Adrenal gland (tissue), 19 donors: ENCODE measurements at regions of chr12 and their contacts with region 1.

Region 1: GRCh38 chr12:66688846-66689439 is 10.1 kb upstream of the GRIP1 start:
- DNase-seq: peak; percentile 16 to 73 (median 36)
- H3K4me3 ChIP-seq: no peak overlapping the region
- H3K27ac ChIP-seq: no peak overlapping the region
- H3K4me1 ChIP-seq: no peaks in the 10 kb centered on the region
- H3K27me3 ChIP-seq: no peaks in the 10 kb centered on the region
- CTCF ChIP-seq: peak; percentile 19 to 58 (median 42)
- POLR2A ChIP-seq: no peak

Region 2: DNA sequence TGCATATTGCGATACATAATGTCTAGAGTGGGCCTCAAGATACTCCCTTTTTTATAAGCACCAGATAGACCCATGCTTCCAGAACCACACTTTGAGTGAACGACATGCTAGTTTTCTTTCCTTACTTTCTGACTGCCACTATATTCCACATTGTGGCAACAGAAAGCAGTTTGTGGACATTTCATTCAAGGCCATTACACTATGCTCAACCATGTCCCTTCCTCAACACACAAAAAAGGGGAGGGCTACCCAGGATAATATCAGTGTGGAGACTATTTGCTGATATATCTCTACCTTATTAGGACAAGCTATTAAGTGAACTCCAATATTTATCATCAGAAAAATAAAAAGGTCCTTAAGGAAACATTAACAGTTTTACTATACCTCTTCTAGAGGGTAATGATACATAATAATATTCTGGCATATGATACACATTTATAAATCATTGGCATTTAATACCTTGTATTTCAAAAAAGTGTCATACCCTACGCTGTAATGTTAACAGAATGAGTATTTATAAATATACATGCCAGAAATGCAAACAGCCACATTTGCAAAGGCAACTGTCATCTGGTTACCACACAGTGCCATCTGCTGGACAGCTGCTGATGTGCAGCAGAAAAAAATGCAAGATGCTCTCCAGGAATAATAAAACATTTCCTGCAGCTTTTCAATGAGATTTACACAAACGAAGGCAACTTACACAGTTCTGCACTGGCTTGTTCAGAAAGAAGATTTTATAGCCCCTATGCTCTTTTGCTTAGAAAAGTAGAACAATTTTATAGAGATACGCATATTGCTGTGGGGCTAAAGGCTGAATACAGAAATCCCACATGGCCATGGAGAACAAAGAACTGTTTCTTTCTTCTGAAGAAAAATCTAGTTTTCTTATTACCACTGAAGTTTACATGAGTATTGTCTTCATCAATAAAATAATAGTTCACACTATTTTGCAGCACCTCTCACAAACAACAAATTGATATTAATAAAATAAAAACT is 172.1 kb after region 1 on chr12:
- intact Hi-C with region 1: loop called in 1 of 2 experiments (anchors 10 kb)
- DNase-seq: peak; percentile 31 to 86 (median 58)
- H3K4me3 ChIP-seq: no peak overlapping the region
- H3K27ac ChIP-seq: no peak overlapping the region
- H3K4me1 ChIP-seq: no peaks in the 10 kb centered on the region
- H3K27me3 ChIP-seq: no peaks in the 10 kb centered on the region
- CTCF ChIP-seq: peak; percentile 65 to 93 (median 73)
- POLR2A ChIP-seq: no peak

Region 3: DNA sequence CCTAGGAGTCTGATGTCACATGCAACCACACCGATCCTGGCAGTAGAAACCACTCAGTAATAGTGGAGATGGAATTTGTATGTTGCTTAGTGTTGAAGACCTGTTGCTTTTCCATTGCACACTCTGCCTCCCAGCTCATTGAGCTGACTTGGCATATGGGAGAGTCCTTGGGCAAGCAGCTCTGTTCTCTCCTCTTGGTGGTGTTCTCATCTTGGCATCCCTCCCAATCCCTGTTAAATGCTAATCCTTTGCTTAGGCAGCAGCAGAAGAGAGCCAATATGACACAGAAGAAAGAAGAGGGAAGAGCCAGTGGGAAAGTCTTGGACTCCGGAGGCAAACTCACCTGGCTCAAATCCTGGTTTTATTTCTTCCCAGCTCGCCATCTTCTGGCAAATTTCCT is 402.3 kb after region 1 on chr12:
- intact Hi-C with region 1: no loop called
- DNase-seq: peak in 3 of 7 donors; percentile 22 to 32 (median 31)
- H3K4me3 ChIP-seq: no peak overlapping the region
- H3K27ac ChIP-seq: no peak overlapping the region
- H3K4me1 ChIP-seq: no peaks in the 10 kb centered on the region
- H3K27me3 ChIP-seq: peaks cover 6% of the 10 kb centered on the region
- CTCF ChIP-seq: no peak
- POLR2A ChIP-seq: no peak